ENCODE measurements at regions of chr9 and their contacts with region 1.

Region 1: GRCh38 chr9:123349691-123350480 is 6.1 kb upstream of the CRB2 start:
- DNase-seq: no peak
- ATAC-seq: peak; percentile 70

Region 2: DNA sequence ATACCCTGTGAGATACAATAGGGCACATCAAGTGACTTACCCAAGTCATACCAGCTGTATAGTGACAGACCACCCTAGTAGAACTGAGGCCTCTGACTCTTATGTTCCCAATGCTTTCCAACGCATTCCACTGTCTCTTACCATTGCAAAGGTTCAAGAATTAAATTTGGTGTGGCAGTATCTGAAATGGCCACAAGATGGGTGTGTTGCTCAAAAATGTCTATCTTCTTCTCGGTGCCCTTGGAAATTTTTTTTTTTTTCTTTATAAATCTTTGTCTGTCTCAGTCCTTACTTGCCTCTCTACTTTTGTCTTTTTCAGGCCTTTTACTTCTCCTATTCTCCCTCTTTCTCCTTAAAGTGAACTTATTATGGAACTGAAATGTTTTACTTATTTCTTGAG is 268.1 kb before region 1 on chr9:
- intact Hi-C with region 1: loop called (anchors 5 kb)
- DNase-seq: no peak
- ATAC-seq: no peak

Region 3: GRCh38 chr9:123112015-123112975 is 237.6 kb before region 1 on chr9:
- intact Hi-C with region 1: loop called (anchors 10 kb)
- DNase-seq: no peak
- ATAC-seq: peak; percentile 26

Region 4: GRCh38 chr9:123174887-123175518 is 174.9 kb before region 1 on chr9:
- intact Hi-C with region 1: loop called (anchors 10 kb)
- DNase-seq: no peak
- ATAC-seq: no peak

Region 5: GRCh38 chr9:123268240-123268949 is 81.5 kb before region 1 on chr9 and contains the start of gene STRBP:
- intact Hi-C with region 1: loop called (anchors 10 kb)
- DNase-seq: peak; percentile 96
- ATAC-seq: peak; percentile 98
- total RNA-seq, gene STRBP: 21.6 TPM

Region 6: GRCh38 chr9:123389070-123389469 is 39.2 kb after region 1 on chr9:
- intact Hi-C with region 1: loop called (anchors 1 kb)
- DNase-seq: peak; percentile 47
- ATAC-seq: no peak